HEK293 (cell line): ENCODE measurements at regions of chr15 and their contacts with region 1.

Region 1: GRCh38 chr15:70636540-70637165 is 126.7 kb downstream of the UACA start:
- H3K4me3 ChIP-seq: no peak overlapping the region
- H3K27ac ChIP-seq: no peak overlapping the region
- H3K4me1 ChIP-seq: no peaks in the 10 kb centered on the region
- CTCF ChIP-seq: peak; percentile 78

Region 2: GRCh38 chr15:70556151-70556741 is 80.4 kb before region 1 on chr15:
- CTCF ChIA-PET with region 1: no interaction called
- POLR2A ChIA-PET with region 1: no interaction called
- H3K4me3 ChIP-seq: no peak overlapping the region
- H3K27ac ChIP-seq: no peak overlapping the region
- H3K4me1 ChIP-seq: no peaks in the 10 kb centered on the region
- CTCF ChIP-seq: no peak

Region 3: DNA sequence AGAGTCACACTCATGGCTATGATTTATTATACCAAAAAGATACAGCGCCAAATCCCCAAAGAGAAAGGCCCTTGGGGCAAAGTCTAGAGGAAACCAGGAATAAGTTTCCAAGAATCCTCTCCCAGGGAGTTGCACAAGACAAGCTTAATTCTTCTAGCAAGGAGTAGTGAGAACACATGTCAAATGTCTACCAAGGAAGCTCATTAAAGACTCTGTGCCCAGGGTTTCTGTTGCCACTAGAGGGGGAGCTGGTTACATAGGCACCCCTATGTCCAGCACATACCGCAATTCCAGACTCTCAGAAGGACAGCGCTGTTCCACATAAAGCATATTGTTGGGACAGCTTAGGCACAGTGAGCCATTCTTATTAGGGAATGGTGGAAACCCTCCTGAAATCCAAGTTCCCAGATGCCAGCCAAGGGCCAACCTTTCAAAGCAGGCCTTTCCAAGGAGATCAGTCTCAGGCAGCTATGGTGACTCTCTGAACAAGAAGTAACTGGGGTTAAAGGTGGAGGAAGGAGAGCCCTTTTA is 67.5 kb before region 1 on chr15:
- CTCF ChIA-PET with region 1: interaction called, 13 read pairs
- POLR2A ChIA-PET with region 1: no interaction called
- H3K4me3 ChIP-seq: no peak overlapping the region
- H3K27ac ChIP-seq: peak overlapping the region; percentile 20; the same call in 1 of the 2 replicates
- H3K4me1 ChIP-seq: peaks cover 15% of the 10 kb centered on the region
- CTCF ChIP-seq: peak; percentile 94